Gastrocnemius medialis (tissue), 4 donors: ENCODE measurements at regions of chr1 and their contacts with region 1.

Region 1: DNA sequence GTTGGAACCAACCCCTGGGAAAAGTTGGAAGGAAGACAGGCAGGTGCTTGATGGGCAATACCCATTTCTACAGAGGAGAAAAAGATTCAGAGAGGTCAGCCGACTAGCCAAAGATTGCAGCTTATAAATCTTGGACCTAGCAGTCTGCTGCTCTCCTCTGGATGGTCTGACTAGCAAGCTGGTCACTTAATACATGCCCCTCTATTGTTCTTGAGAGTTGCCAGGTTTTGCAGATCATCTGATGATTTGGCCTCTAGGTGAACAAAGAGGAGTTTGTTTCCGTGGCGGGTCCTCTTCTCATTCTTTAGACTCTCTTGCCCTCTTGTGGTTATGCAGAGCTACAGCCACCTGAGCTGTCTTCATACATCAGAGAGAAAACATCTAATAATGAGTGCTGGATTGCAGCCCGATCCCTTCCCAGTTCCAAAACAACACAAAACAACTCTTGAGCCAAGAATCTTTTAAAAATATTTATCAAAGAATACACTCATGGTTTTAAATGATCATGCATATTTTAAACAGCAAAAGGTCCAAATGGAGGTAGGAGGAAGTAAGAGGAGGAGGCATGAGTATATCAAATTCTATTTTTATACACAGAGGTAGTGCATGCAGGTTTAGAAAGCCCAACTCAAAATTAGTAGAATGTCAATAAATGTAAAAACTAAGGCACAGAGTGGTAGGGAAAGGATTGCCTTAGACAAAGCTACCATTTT is 115.7 kb downstream of the SLC30A10 start:
- DNase-seq: no peak
- ATAC-seq: no peak
- H3K4me3 ChIP-seq: no peak overlapping the region
- H3K27ac ChIP-seq: no peak overlapping the region
- H3K4me1 ChIP-seq: no peaks in the 10 kb centered on the region
- H3K27me3 ChIP-seq: peaks cover 0 to 2% (median 0%) of the 10 kb centered on the region in 3 donors
- CTCF ChIP-seq: peak; percentile 9 to 51 (median 29)
- POLR2A ChIP-seq: no peak

Region 2: GRCh38 chr1:218323568-218324225 is 1489.0 kb before region 1 on chr1:
- in situ Hi-C with region 1: loop called in 1 of 4 experiments (anchors 10 kb)
- intact Hi-C with region 1: no loop called
- DNase-seq: no peak
- ATAC-seq: no peak
- H3K4me3 ChIP-seq: no peak overlapping the region
- H3K27ac ChIP-seq: no peak overlapping the region
- H3K4me1 ChIP-seq: no peaks in the 10 kb centered on the region
- H3K27me3 ChIP-seq: no peaks in the 10 kb centered on the region
- CTCF ChIP-seq: no peak
- POLR2A ChIP-seq: no peak

Region 3: GRCh38 chr1:219744652-219745469 is 67.8 kb before region 1 on chr1:
- in situ Hi-C with region 1: loop called in 1 of 4 experiments (anchors 10 kb)
- intact Hi-C with region 1: no loop called
- DNase-seq: no peak
- ATAC-seq: no peak
- H3K4me3 ChIP-seq: no peak overlapping the region
- H3K27ac ChIP-seq: no peak overlapping the region
- H3K4me1 ChIP-seq: no peaks in the 10 kb centered on the region
- H3K27me3 ChIP-seq: no peaks in the 10 kb centered on the region
- CTCF ChIP-seq: no peak
- POLR2A ChIP-seq: no peak

Region 4: GRCh38 chr1:220217383-220217988 is 404.8 kb after region 1 on chr1:
- in situ Hi-C with region 1: no loop called
- intact Hi-C with region 1: no loop called
- DNase-seq: no peak
- ATAC-seq: no peak
- H3K4me3 ChIP-seq: no peak overlapping the region
- H3K27ac ChIP-seq: no peak overlapping the region
- H3K4me1 ChIP-seq: peaks cover 3 to 16% of the 10 kb centered on the region in 2 donors
- H3K27me3 ChIP-seq: no peaks in the 10 kb centered on the region
- CTCF ChIP-seq: no peak
- POLR2A ChIP-seq: no peak